ENCODE measurements at regions of chr11 and their contacts with region 1.

Region 1: GRCh38 chr11:64652586-64653387 is 61.8 kb downstream of the SLC22A12 start:
- DNase-seq: no peak
- H3K4me3 ChIP-seq: no peak overlapping the region
- H3K27me3 ChIP-seq: peaks cover 5% of the 10 kb centered on the region; the same call in 1 of the 2 replicates
- CTCF ChIP-seq: peak; percentile 92

Region 2: DNA sequence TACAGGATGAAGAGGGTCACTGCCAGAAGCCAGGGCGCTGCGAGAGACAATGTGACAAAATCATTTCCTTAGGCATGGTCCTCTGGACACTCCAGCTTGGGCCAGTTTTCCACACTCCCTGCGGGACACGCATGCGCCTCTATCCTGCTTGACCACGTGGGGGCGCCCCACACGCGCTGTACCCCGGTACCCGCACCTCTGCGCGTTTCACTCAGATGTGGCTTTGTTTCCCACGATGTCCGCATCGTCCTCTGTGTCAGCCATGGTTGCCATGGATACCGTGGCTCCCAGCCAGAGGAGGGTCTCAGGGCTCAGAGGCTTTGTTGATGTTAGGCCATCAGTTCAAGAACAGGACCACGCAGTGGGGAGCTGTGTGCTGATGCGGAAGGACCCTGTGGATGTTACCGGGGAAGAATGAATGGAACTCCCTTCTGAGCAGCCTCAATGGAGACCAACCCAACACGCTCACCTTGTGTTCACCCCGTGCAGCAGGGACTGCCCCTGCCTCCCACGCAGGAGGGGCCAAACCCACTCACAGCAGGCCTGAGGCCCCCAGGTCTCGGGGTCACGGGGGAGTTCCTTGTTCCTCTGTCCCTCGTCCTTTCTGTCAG is 162.9 kb before region 1 on chr11:
- CTCF ChIA-PET with region 1: interaction called, 10 read pairs
- POLR2A ChIA-PET with region 1: no interaction called
- DNase-seq: no peak
- H3K4me3 ChIP-seq: no peak overlapping the region
- H3K27me3 ChIP-seq: peaks cover 9% of the 10 kb centered on the region
- CTCF ChIP-seq: peak; percentile 74

Region 3: DNA sequence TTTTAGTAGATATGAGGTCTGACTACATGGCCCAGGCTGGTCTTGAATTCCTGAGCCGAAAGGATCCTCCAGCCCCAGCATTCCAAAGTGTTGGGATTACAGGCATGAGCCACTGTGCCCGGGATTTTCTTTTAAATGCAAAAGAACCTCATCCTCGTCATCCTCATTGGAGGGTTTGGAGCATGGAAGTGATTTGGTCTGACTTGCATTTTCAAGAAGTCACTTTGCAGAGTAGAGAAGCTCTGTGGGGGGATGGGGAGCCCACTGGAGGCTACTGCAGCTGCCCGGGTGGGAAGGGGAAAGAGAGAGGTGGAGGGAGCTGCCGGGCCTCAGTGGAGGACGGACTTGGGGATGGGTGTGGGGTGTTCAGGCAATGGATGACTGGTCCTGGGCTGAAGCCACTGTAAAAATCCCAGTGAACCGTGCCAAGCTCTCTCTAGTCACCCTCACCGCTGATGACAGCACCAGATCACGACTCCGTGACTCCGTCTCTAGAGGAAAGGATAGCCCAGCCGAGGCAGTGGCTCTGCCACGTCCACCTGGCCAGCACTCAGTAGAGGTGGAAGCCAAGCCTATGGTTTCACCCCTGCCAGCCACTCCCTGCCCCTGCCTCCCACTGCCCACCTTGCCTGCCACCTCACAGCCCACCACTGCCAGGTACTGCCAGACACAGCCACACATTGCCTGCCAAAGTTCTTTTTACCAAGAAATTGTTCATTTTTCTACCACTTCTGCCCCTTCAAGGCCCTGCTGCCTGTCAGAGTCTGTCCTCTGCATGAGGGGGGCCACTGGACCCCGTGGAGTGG is 94.5 kb before region 1 on chr11:
- CTCF ChIA-PET with region 1: interaction called, 14 read pairs
- POLR2A ChIA-PET with region 1: no interaction called
- DNase-seq: no peak
- H3K4me3 ChIP-seq: no peak overlapping the region
- H3K27me3 ChIP-seq: peaks cover 4% of the 10 kb centered on the region; the same call in 1 of the 2 replicates
- CTCF ChIP-seq: no peak

Region 4: GRCh38 chr11:64633555-64634159 is 19.1 kb before region 1 on chr11:
- CTCF ChIA-PET with region 1: interaction called, 10 read pairs
- POLR2A ChIA-PET with region 1: no interaction called
- DNase-seq: no peak
- H3K4me3 ChIP-seq: no peak overlapping the region
- H3K27me3 ChIP-seq: peaks cover 18% of the 10 kb centered on the region
- CTCF ChIP-seq: no peak

Region 5: DNA sequence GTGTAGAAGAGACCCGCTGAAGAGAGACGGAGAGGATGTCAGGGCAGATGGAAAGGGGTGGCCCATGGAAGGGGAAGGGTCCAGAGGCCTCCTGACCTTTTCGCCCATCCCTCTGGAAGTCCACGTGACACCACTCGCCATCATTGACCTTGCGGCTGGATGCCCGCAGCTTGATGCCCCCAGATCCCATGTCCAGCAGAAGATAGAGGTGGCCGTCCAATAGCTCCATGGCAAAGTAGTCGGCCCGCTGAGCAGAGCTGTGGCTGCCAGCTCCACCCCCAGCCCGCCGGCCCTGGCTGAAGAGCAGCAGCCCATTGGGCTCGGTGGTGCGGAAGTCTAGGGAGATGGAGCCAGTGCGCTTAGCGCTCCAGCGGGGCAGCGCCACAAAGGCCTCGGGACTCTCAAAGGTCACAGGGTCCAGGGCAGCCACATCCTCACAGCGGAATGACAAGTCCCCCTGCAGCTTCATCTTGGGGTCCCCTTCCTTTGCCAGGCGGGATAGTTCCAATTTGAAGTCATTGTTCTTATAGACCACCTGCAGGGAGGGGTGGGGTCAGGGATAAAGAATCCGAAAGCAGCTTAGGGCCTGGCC is 14.5 kb after region 1 on chr11:
- CTCF ChIA-PET with region 1: interaction called, 41 read pairs
- POLR2A ChIA-PET with region 1: no interaction called
- DNase-seq: no peak
- H3K4me3 ChIP-seq: no peak overlapping the region
- H3K27me3 ChIP-seq: peaks cover 24% of the 10 kb centered on the region
- CTCF ChIP-seq: no peak

Region 6: GRCh38 chr11:64736654-64737053 is 83.9 kb after region 1 on chr11:
- CTCF ChIA-PET with region 1: no interaction called
- POLR2A ChIA-PET with region 1: no interaction called
- DNase-seq: no peak
- H3K4me3 ChIP-seq: no peak overlapping the region
- H3K27me3 ChIP-seq: peaks cover 22% of the 10 kb centered on the region
- CTCF ChIP-seq: no peak

Region 7: GRCh38 chr11:64854534-64855429 is 202.0 kb after region 1 on chr11:
- CTCF ChIA-PET with region 1: no interaction called
- POLR2A ChIA-PET with region 1: no interaction called
- DNase-seq: no peak
- H3K4me3 ChIP-seq: no peak overlapping the region
- H3K27me3 ChIP-seq: no peaks in the 10 kb centered on the region
- CTCF ChIP-seq: no peak

Region 8: DNA sequence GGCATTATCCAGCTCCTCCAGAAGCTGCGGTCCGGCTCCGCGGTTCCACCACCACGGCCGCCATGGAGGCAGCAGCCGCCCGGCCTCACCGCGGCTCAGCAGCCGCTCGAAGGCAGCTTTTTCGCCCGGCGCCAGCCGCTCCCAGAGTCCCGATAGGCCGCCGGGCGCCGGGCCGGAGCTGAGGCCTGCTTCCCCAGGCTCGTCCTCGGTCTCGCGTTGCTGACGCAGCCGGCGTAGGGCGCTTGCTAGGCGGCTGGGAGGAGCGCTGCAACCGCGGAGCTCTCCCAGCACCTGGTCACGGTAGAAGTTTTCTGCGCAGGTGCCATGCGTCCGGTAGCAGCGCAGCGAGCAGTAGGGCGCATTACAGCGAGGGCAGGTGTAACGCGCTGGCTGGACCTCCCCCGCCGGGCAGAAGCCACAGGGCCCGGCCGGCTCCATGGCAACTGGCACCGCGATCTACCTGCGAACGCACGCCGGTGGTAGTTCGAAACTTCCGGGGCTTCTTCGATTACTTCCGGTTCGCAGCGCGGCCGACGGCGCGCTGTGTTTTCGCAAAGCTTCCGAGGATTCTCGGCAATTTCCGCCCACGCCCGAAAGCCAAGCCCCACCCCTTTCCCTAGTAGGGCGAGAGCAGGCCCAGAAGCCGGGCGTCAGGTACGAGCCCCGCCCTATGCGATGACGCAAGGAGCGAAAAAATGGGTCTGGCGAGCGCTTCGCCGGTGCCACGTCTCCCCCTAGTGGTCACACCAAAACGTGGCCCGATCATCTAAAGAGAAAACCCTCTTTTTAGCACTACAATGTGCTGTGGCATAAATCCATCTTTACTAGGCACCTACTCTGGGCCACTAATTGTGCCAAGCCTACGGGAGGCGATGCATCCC is 464.7 kb after region 1 on chr11 and contains the start of gene ZNHIT2:
- CTCF ChIA-PET with region 1: no interaction called
- POLR2A ChIA-PET with region 1: no interaction called
- DNase-seq: peak; percentile 94
- H3K4me3 ChIP-seq: peak within 1 kb of the TSS; percentile 79
- H3K27me3 ChIP-seq: no peaks in the 10 kb centered on the region
- CTCF ChIP-seq: peak; percentile 90
- polyA plus RNA-seq, gene ZNHIT2: 3.6 and 4.6 TPM in 2 replicates

Measured in BJ (cell line).